Cardiac septum (tissue), 1 donor: ENCODE measurements at regions of chr22 and their contacts with region 1.

Region 1: DNA sequence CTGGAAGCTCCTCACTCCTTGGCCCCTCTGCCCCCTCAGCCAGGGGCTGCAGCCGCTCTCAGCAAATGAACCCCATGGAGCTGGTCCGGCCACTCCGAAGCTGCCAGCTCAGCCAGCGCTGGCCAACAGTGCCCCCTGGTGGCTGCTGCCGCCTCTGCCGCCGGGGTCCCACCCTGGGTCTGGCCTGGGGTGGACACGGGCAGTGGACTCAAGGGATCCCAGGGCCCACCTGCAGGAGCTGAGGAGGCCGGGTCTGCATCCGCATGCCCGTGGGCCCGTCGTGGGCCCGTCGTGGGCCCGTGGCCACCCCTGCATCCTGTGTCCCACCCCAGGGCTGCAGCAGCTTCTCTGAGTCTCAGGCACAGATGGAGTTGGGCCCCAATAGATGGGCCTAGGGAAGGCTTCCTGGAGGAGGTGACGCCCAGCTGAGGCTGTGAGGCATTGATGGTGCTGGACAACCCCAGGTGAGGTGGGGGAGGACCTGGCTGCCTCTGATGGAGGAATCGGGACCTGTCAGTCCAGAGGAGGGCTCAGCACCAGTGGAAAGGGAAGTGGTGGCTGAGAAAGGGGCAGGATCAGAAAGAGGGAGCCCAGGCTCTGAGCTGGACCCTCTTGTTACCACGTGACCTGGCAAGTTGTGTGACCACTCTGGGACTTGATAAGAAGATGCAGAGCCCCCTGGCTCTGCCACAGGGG is 522.3 kb downstream of the BRD1 start:
- DNase-seq: peak; percentile 83

Region 2: DNA sequence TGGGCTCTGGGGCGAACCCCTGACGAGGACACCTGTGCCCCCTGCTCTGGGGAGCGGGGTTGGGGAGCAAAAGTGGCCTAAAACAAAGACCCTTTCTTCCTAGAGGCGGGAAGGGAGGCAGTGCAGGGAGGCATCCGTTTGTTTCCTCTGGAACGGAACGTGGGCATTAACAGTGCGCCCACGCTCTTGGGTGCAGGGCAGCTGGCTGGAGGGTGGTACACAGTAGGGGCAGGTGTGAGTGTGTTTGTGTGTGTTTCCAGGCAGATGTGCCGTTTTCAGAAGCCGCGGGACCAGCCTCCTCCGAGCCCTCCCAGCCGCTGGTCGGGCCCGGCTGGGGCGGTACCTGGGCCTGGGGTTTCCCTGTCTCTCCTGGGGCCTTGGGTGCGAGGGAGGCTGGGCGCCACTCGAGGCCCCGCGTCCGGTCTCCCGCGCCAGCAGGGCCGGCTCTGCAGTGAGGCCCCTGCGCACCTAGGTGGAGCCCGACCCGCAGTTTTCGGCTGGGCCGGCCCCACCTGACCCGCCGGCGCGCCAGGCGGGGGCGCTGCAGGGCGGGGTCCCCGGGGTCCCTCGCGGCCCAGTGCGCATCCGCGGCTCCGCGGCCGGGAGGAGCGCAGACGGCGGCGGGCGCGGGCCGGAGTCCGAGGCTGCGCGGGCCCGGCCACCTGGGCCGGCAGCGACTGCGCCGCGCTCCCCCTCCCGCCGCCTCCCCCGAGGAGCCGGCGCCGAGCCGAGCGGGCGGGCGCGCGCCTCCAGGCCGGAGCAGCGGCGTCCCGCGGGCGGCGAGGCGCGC is 730.4 kb before region 1 on chr22:
- intact Hi-C with region 1: loop called (anchors 5 kb)
- DNase-seq: no peak

Region 3: GRCh38 chr22:49046546-49047361 is 258.6 kb before region 1 on chr22:
- intact Hi-C with region 1: loop called (anchors 2 kb)
- DNase-seq: peak; percentile 75

Region 4: GRCh38 chr22:49235463-49236300 is 69.7 kb before region 1 on chr22:
- intact Hi-C with region 1: no loop called
- DNase-seq: no peak

Region 5: GRCh38 chr22:49404576-49405241 is 99.3 kb after region 1 on chr22:
- intact Hi-C with region 1: no loop called
- DNase-seq: peak; percentile 36